Activated naive CD4-positive, alpha-beta T cell treated with anti-CD3 and anti-CD28 coated beads for 36 hours (primary cell): ENCODE measurements at regions of chr12 and their contacts with region 1.

Region 1: GRCh38 chr12:103571286-103571685 is 15.8 kb upstream of the STAB2 start:
- DNase-seq: no peak
- H3K4me3 Mint-ChIP-seq: no peak overlapping the region
- H3K27ac Mint-ChIP-seq: no peak overlapping the region
- H3K4me1 Mint-ChIP-seq: peaks cover 5% of the 10 kb centered on the region
- H3K27me3 Mint-ChIP-seq: peaks cover 64% of the 10 kb centered on the region

Region 2: DNA sequence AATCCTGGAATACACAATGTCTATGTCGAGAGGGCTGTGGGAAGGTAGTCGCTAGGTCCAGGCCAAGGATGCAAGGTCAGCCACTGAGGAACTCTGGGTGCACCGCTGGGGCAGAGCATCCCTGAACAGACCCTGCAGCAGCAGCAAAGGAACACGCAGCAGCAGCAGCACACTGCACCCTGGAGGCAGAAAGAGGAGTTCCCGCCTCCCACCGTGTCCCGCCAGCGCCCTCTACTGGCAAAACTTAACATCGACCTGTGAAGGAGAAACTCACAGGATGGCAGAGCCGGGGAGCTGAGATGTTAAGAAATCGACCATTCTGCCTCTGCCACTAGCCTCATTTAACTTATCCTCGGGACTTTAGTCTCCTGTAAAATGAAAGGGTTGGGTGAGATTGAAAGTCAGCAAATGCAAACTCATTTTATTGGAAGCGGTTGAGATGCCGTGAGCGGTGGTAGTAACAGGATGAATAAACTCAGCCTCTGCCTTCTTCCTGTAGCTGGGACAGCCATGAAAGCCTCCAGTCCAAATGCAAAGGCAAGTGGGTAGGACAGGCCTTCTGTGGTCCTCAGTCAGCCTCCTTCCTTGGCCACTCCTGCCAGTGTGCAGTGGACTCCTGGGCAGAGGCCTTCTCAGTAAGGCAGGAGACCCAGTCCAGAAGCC is 61.4 kb after region 1 on chr12:
- CTCF ChIA-PET with region 1: interaction called, 4 read pairs
- intact Hi-C with region 1: loop called (anchors 1 kb)
- DNase-seq: peak; percentile 79
- H3K4me3 Mint-ChIP-seq: no peak overlapping the region
- H3K27ac Mint-ChIP-seq: no peak overlapping the region
- H3K4me1 Mint-ChIP-seq: no peaks in the 10 kb centered on the region
- H3K27me3 Mint-ChIP-seq: peaks cover 2% of the 10 kb centered on the region

Region 3: GRCh38 chr12:103868215-103868614 is 296.9 kb after region 1 on chr12:
- CTCF ChIA-PET with region 1: no interaction called
- intact Hi-C with region 1: loop called (anchors 1 kb)
- DNase-seq: no peak
- H3K4me3 Mint-ChIP-seq: no peak overlapping the region
- H3K27ac Mint-ChIP-seq: no peak overlapping the region
- H3K4me1 Mint-ChIP-seq: no peaks in the 10 kb centered on the region
- H3K27me3 Mint-ChIP-seq: no peaks in the 10 kb centered on the region